ENCODE measurements at regions of chr10 and their contacts with region 1.

Region 1: GRCh38 chr10:55747244-55747643 is 613.8 kb downstream of the ZWINT start:
- DNase-seq: peak; percentile 25
- H3K4me3 Mint-ChIP-seq: no peak overlapping the region
- H3K27ac Mint-ChIP-seq: no peak overlapping the region
- H3K4me1 Mint-ChIP-seq: no peaks in the 10 kb centered on the region
- H3K27me3 Mint-ChIP-seq: peaks cover 66% of the 10 kb centered on the region
- CTCF ChIP-seq: no peak

Region 2: DNA sequence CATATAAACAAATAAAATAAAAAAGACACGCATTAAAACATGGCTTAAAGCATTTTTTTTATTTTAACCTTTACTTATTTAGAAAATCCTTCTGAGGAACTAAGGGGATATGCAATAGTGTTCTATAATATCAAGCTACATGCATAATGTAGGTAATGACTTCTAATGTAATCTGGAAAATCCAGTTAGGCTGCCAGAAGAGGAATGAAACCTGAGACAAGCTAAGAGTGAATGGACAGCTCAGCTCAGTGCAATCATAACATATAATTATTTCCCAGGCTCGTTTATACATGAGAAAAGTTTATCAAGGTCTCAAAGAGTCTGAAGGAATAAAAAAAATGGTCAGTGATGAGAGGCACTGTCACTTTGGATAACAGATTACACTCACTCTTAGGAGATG is 297.3 kb before region 1 on chr10:
- CTCF ChIA-PET with region 1: no interaction called
- POLR2A ChIA-PET with region 1: no interaction called
- intact Hi-C with region 1: loop called (anchors 10 kb)
- DNase-seq: no peak
- H3K4me3 Mint-ChIP-seq: no peak overlapping the region
- H3K27ac Mint-ChIP-seq: no peak overlapping the region
- H3K4me1 Mint-ChIP-seq: no peaks in the 10 kb centered on the region
- H3K27me3 Mint-ChIP-seq: peaks cover 65% of the 10 kb centered on the region
- CTCF ChIP-seq: no peak

Region 3: DNA sequence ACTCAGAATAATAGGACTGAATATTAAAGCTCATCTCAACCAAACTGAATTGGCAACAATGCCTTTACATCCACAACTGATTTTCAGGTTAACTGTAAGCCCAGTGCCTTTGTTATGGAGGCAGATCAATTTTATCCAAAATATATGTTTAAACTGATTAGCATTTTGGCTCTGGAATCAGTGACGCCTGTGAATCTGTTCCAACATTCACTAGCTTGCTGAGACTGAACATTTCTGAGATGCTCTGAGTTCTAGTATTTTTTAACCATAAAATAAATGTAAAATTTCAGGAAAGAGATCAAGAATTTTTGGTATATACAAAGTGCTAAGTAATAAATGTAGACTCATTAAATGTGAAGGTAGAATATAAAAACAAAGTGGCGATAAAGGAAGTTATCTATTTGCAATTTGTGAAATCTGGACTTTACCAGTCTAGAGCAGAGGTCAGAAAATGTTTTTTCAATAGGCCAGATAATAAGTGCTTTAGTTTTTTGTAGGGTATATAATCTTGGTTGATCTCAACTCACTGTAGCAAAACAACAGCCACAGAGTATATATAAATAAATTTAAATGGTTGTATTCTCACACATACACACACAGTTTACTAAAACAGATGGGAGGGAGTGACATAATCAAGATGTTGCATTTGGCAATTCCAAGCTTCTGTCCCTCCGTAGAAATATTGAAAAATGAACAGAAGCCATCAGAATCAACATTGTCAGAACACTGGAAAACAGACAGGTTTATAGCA is 53.5 kb after region 1 on chr10:
- CTCF ChIA-PET with region 1: no interaction called
- POLR2A ChIA-PET with region 1: no interaction called
- intact Hi-C with region 1: no loop called
- DNase-seq: no peak
- H3K4me3 Mint-ChIP-seq: no peak overlapping the region
- H3K27ac Mint-ChIP-seq: no peak overlapping the region
- H3K4me1 Mint-ChIP-seq: no peaks in the 10 kb centered on the region
- H3K27me3 Mint-ChIP-seq: peaks cover 26% of the 10 kb centered on the region
- CTCF ChIP-seq: no peak